ENCODE measurements at regions of chr1 and their contacts with region 1.

Region 1: DNA sequence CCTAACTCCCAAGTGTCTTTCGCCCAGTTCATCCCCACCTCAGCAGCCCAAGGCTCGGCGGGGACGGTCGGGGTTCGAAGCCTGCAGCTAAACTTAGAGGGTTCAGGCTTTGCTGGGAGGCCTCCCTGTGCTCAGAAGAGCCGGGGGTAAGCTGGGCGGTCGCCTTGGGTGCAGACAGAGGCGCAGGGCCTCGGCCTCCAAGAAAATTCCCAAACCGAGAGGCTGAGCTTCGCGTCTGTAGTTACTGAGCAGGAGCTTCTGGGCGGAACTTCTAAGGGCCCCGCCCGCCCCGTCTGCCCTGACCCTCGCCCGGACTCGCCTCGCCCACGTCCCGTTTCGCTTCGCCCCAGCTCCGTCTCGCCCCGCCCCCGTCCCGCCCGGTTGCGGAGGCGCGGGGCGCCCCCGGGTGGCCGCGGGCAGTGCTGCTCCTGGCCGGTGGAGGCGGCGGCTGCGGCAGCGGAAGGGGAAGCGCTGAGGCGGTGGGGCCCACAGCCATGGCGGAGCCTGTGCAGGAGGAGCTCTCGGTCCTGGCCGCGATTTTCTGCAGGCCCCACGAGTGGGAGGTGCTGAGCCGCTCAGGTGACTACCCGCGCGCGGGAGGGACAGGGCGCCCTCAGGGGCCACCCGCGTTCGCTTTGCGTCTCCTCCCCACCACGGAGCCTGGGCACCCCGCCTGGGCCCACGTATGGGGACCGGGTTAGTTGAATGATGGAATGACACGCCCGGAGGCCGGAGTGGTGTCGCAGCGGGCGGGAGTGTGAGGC is at the start of gene RWDD3:
- DNase-seq: peak; percentile 81 to 98 (median 89)

Region 2: GRCh38 chr1:94936861-94937620 is 296.9 kb before region 1 on chr1:
- intact Hi-C with region 1: no loop called
- DNase-seq: no peak

Region 3: GRCh38 chr1:95072532-95073419 is 161.1 kb before region 1 on chr1 and contains the start of gene ALG14:
- intact Hi-C with region 1: loop called (anchors 2 kb)
- DNase-seq: peak; percentile 86 to 98 (median 94)

Region 4: DNA sequence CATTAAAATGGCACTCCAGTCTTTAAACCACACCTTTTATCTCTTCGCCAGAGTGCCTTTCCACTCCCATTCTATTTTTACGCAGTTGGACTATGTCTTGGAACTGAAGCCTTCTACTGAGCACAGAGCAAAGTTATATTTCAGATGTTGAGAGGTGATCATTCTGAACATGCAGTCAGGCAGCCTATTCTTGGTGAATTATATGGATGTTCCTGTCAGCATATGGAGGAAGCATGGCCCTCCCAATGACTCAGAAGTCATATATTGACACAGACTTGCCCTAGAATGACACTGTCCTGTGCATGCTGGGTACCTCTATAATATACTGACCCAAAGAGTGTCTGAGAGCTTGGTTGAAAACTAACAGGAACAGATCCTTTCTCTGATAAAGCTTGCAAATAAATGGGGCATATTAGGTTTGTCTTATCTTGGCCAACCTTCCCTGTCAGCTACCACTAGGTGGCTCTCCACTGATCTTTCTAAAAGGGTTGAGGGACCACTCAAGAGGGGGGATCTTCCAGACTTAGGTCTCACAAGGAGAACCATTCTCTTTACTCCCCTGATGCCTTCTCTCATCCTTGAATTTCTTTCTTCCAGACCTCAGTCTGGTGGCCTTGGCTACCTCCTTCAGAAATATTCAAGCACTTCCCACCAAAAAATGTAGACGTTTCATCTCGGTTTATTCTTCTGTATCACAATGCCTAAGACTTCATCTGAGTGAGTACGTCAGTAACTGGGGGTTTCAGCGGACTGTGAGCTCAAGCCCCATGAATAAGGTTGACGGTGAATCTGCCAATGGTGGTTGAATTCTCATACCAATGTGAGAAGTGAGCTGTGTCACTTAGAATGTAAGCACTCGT is 149.4 kb before region 1 on chr1:
- intact Hi-C with region 1: loop called (anchors 1 kb)
- DNase-seq: peak in 3 of 10 donors; percentile 5 to 41 (median 21)

Region 5: DNA sequence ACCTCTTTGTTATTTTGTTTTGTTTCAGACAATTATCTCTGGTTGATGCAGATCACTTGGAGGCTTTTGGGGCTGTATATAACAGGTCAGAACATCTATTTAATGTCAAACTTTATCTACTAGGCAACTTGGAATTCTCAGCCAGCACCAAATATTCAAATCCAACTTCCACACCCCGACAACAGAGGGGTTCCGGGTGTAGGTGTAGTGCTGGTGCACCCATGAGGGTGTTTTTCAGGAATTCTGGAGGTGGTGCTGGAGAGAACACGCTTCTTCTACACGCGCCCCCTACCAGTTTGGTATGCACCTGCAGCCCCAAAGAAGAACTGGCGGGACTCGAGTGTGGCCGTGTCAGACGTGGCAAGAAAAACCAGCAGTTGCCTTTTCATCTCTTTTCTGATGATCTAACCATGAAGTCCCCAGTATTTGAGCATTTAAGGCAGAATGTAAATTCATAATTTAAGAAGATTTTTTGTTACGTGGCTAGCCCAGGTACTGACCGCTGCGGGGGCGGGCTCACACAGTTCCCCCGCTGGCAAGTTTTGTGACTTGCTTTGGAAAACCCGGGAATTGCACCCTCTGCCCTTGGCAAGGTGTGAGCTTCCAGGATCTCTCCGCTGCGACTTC is 117.2 kb before region 1 on chr1:
- intact Hi-C with region 1: loop called (anchors 5 kb)
- DNase-seq: peak; percentile 17 to 91 (median 56)